PC-9 (cell line): ENCODE measurements at regions of chr2 and their contacts with region 1.

Region 1: GRCh38 chr2:128321784-128322714 is 3.4 kb upstream of the HS6ST1 start:
- DNase-seq: peak; percentile 66 to 85
- H3K4me3 ChIP-seq: peak overlapping the region; percentile 90
- H3K27ac ChIP-seq: peak overlapping the region; percentile 52; the same call in 1 of the 2 replicates
- H3K4me1 ChIP-seq: peaks cover 3% of the 10 kb centered on the region
- H3K27me3 ChIP-seq: no peaks in the 10 kb centered on the region
- CTCF ChIP-seq: peak; percentile 85

Region 2: GRCh38 chr2:126518195-126518594 is 1803.9 kb before region 1 on chr2:
- CTCF ChIA-PET with region 1: no interaction called
- POLR2A ChIA-PET with region 1: no interaction called
- intact Hi-C with region 1: no loop called
- DNase-seq: peak in 1 of 2 experiments; percentile 21
- H3K4me3 ChIP-seq: no peak overlapping the region
- H3K27ac ChIP-seq: no peak overlapping the region
- H3K4me1 ChIP-seq: no peaks in the 10 kb centered on the region
- H3K27me3 ChIP-seq: no peaks in the 10 kb centered on the region
- CTCF ChIP-seq: no peak

Region 3: GRCh38 chr2:127884436-127885345 is 437.4 kb before region 1 on chr2:
- CTCF ChIA-PET with region 1: no interaction called
- POLR2A ChIA-PET with region 1: no interaction called
- intact Hi-C with region 1: loop called (anchors 10 kb)
- DNase-seq: peak in 1 of 2 experiments; percentile 6
- H3K4me3 ChIP-seq: peak overlapping the region; percentile 60
- H3K27ac ChIP-seq: no peak overlapping the region
- H3K4me1 ChIP-seq: peaks cover 26% of the 10 kb centered on the region
- H3K27me3 ChIP-seq: no peaks in the 10 kb centered on the region
- CTCF ChIP-seq: no peak

Region 4: GRCh38 chr2:128250229-128251025 is 71.6 kb before region 1 on chr2:
- CTCF ChIA-PET with region 1: no interaction called
- POLR2A ChIA-PET with region 1: no interaction called
- intact Hi-C with region 1: no loop called
- DNase-seq: no peak
- H3K4me3 ChIP-seq: no peak overlapping the region
- H3K27ac ChIP-seq: no peak overlapping the region
- H3K4me1 ChIP-seq: no peaks in the 10 kb centered on the region
- H3K27me3 ChIP-seq: no peaks in the 10 kb centered on the region
- CTCF ChIP-seq: no peak

Region 5: DNA sequence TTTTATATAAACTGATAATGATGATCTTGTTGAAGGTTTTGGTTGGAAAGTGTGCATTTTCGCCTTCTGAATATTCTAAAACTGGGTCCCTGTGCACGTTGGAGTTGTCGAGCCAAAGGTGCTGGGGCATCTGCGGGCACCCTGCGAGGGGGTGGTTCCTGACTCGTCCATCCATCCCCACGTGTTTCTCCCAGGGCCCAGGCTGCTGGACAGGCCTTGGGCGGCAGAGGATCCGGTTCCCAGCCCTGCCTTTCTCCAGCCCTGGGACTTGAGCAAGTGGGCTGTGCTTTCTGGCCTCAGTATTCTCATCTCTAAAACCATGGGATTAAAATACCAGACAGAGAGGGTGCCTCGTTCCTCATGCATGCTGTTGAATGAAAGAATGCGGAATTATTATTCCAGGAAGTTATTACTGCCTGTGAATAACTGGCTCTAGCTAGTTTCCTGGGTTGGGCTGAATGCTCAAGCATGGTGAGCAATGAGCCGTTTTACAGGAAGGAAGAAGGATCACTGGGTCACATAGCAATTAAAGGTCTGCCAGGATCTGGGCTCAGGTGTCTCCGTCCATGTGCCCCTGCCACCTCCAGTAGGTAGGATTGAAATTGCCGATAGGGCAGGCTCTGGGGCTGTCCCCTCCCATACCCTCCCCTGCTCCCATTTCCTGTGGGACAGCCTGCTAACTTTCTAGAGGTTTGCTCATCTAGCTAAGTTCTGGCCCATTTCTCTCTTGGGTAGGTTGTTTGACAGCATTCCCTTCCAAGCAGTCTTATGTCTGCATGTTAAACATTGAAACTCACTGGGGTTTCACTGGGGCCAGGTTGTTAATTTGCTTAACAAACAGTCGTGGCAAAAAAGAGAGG is 73.8 kb after region 1 on chr2:
- CTCF ChIA-PET with region 1: no interaction called
- POLR2A ChIA-PET with region 1: no interaction called
- intact Hi-C with region 1: loop called (anchors 5 kb)
- DNase-seq: peak; percentile 49 to 98
- H3K4me3 ChIP-seq: no peak overlapping the region
- H3K27ac ChIP-seq: peak overlapping the region; percentile 59
- H3K4me1 ChIP-seq: peaks cover 24% of the 10 kb centered on the region
- H3K27me3 ChIP-seq: no peaks in the 10 kb centered on the region
- CTCF ChIP-seq: no peak

Region 6: GRCh38 chr2:128425731-128426620 is 103.9 kb after region 1 on chr2:
- CTCF ChIA-PET with region 1: interaction called, 3 read pairs
- POLR2A ChIA-PET with region 1: interaction called, 5 read pairs
- intact Hi-C with region 1: loop called (anchors 5 kb)
- DNase-seq: peak; percentile 78 to 98
- H3K4me3 ChIP-seq: peak overlapping the region; percentile 36; the same call in 1 of the 2 replicates
- H3K27ac ChIP-seq: peak overlapping the region; percentile 70
- H3K4me1 ChIP-seq: peaks cover 62% of the 10 kb centered on the region
- H3K27me3 ChIP-seq: no peaks in the 10 kb centered on the region
- CTCF ChIP-seq: no peak; the same call in 1 of the 2 replicates

Region 7: DNA sequence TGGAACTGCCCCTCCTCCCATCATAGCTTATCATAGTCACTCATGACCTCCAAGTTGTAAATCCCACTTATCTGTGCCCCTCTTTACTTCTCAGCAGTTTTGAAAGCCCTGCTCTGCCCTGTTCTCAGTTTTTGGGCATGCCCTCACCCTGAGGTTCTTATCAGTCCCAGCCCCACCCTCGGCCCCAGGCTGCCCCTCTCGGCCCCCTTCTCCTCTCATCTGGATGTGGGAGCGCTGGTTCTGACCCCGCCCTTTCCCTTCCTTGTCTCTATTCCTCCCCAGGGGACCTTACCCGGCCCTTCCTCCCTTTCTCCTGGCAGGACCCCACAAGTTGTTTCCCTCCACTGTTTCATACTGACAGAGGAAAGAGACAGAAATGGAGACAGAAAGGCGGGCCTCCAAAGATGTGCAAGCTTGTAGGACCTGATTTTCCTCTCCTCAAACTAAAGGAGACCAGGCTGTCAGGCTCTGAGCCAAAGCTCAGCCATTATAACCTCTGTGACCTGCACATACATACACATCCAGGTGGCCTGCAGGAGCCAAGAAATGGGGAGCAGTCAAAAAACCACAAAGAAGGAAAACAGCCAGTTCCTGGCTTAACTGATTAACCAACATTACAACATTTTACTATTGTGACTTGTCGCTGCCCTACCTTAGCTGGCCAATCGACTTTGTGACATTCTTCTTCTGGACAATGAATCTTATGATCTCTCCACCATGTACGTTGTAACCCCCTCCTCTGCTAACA is 167.7 kb after region 1 on chr2:
- CTCF ChIA-PET with region 1: no interaction called
- POLR2A ChIA-PET with region 1: no interaction called
- intact Hi-C with region 1: loop called (anchors 5 kb)
- DNase-seq: peak; percentile 73 to 99
- H3K4me3 ChIP-seq: peak overlapping the region; percentile 32; the same call in 1 of the 2 replicates
- H3K27ac ChIP-seq: peak overlapping the region; percentile 83
- H3K4me1 ChIP-seq: peaks cover 41% of the 10 kb centered on the region
- H3K27me3 ChIP-seq: no peaks in the 10 kb centered on the region
- CTCF ChIP-seq: no peak